Activated T-helper 1 cell treated with anti-CD3 and anti-CD28 coated beads, Interleukin-12 subunit alpha, Interleukin-12 subunit beta, Interleukin-2, Interleukin-4 antibody, amounts not matched to agents 30 ng/mL and 10 ng/mL and 1 ng/mL, durations not matched to agents 14 hours and 24 hours and 36 hours (primary cell): ENCODE measurements at regions of chr4 and their contacts with region 1.

Region 1: DNA sequence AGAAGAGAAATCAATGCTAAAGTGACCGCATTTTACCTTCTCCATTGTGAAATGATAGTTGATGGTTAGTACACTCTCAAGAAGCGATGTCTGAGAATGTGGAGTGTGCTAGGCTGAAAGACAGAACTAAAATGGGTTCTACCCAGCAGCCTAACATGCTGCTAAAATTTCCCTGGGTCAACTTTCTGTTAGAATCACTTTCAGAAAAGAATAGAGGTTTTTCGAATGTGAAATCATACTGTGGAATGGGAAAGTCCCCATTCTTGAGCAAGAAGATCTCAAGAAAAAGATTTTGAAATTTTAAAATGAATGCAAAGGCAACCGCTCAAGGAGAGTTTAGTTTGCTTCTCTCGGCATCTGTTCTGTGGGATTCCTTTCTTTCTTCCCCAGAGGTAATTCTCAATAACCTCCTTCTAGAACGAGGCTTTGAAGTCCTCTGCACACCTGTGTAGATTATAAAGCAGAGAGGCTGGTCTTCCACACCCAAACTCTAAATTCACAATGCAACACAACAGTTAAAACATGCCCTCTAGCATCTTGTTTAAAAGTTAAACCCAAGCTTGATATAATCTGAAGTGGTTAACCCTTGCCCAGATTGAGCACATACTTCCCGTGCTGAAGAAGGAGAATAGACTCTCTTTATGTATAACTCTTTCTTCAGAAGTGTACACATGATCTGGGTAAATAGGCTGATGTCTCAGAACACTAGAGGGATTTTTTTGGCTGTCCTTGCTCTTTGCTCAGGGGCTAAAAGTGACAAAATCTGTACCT is 208.7 kb upstream of the KLF3 start:
- DNase-seq: no peak
- H3K4me3 Mint-ChIP-seq: peak overlapping the region; percentile 16
- H3K27ac Mint-ChIP-seq: peak overlapping the region; percentile 45
- H3K4me1 Mint-ChIP-seq: peaks cover 46% of the 10 kb centered on the region
- H3K27me3 Mint-ChIP-seq: peaks cover 4% of the 10 kb centered on the region

Region 2: GRCh38 chr4:37977471-37978247 is 477.6 kb before region 1 on chr4:
- intact Hi-C with region 1: loop called (anchors 1 kb)
- DNase-seq: peak; percentile 70
- H3K4me3 Mint-ChIP-seq: peak overlapping the region; percentile 86
- H3K27ac Mint-ChIP-seq: peak overlapping the region; percentile 81
- H3K4me1 Mint-ChIP-seq: peaks cover 41% of the 10 kb centered on the region
- H3K27me3 Mint-ChIP-seq: no peaks in the 10 kb centered on the region

Region 3: DNA sequence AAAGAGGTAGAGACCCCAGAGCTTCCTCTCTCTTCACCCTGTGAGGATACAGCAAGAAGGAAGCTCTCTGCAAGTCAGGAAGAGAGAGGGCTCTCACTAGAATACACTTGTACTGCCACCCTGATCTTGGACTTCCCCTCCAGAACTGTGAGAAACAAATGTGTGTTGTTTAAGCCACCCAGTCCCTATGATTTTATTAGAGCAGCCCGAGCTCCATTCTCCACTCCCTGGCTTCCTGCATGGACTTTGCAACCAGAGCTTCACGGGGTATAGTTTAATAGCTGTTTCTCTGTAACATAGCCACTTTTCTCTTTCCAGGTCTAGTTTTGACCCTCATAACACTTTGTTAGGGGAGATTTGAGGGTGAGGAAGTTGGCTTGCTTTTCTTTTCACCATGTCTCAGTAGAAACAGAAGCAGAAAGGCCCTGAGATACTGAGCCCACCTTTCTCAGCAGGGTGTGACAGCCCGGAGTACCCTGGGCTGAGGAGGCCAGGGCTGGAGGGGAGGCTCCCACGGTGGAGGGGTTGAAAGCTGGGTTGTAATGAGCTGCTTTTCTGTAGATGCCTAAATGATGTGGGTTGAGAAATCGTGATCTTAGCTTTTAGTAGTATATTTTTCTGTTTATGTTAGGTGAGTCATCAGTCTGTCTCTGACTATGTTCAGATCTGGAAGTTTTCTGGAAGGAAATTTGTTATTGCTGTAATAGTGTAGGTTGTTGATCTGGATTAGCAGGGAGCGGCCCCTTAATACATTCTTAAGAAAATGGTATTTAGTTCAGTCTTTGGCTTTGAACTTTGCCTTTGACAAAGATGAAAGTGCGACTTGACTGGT is 376.5 kb before region 1 on chr4:
- intact Hi-C with region 1: no loop called
- DNase-seq: no peak
- H3K4me3 Mint-ChIP-seq: no peak overlapping the region
- H3K27ac Mint-ChIP-seq: peak overlapping the region; percentile 77
- H3K4me1 Mint-ChIP-seq: peaks cover 30% of the 10 kb centered on the region
- H3K27me3 Mint-ChIP-seq: no peaks in the 10 kb centered on the region

Region 4: GRCh38 chr4:38297061-38297460 is 158.2 kb before region 1 on chr4:
- intact Hi-C with region 1: no loop called
- DNase-seq: no peak
- H3K4me3 Mint-ChIP-seq: no peak overlapping the region
- H3K27ac Mint-ChIP-seq: no peak overlapping the region
- H3K4me1 Mint-ChIP-seq: no peaks in the 10 kb centered on the region
- H3K27me3 Mint-ChIP-seq: peaks cover 25% of the 10 kb centered on the region

Region 5: DNA sequence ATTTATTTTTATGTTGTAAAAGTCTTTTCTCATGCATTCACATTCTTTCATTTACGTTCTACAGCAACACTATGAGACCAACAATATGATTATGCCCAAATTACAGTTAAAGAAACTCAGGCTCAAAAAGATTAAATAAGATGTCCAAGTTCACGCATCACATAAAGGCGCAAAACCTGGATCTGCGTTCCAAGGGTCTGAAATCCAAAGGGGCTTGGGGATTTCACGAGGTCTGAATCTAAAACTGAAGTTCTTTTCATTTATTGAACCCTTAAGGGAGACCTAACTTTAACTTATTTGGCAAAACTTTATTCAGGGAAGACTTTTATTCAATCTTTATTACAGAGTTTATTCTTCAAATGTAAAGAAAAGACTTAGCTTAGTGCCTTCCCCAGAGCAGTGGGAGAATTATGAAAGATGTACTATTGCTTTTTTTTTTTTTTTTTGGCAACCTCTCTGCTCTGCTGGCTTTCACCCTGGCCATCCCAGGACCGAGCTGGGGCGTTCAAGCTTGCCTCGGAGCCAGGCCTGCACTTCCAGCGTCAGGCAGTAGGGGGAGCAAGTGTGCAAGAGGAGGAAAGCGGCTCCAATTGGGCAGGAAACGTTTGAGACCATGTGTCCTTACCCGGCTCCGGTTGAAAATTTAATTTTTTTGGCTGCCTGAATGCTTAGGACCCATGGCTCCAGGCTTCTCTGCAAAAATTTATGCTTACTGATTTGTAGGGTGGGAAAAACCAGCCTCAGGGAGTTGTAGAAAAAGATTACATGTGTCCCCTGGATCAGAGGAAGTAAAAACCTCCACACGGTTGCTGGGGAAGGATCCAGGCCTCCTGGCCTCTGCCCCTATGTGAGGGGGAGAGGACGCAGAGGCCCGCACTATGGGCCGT is 135.6 kb before region 1 on chr4:
- intact Hi-C with region 1: loop called (anchors 5 kb)
- DNase-seq: peak; percentile 83
- H3K4me3 Mint-ChIP-seq: peak overlapping the region; percentile 48
- H3K27ac Mint-ChIP-seq: peak overlapping the region; percentile 79
- H3K4me1 Mint-ChIP-seq: peaks cover 55% of the 10 kb centered on the region
- H3K27me3 Mint-ChIP-seq: peaks cover 5% of the 10 kb centered on the region

Region 6: DNA sequence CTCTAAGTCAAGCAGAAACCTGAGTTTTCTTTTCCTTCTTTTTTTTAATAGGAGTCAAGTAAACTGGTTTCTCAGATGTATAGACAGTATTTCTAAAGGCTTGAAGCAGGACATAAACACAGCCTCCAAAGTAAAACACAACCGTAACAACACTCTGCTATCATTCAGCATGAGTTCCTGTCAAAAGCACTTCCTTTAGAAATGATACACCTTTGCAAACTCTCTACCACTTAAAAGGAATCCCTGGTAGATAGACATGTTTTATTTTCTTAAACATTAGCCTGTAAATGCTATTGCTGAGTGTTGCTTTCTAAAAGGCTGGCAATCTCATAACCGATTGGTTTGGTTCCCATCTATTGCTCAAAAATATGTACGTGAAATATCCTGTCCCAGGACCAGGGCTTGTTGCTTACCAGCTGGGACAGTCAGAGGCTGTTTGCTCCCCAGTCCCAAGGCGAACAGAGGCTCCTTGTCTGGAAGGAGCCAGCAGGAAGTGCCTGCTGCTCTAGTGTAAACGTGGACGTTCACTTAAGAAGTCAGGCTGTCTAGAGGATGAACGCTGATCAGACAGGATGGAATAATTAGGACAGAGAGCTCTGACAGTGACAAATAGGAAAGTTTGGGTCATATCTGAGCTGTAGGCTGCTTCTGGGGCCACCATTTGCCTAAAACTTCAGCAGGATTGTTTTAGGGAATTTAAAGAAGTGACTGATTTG is 34.8 kb after region 1 on chr4:
- intact Hi-C with region 1: loop called (anchors 2 kb)
- DNase-seq: no peak
- H3K4me3 Mint-ChIP-seq: no peak overlapping the region
- H3K27ac Mint-ChIP-seq: no peak overlapping the region
- H3K4me1 Mint-ChIP-seq: peaks cover 29% of the 10 kb centered on the region
- H3K27me3 Mint-ChIP-seq: peaks cover 6% of the 10 kb centered on the region

Region 7: DNA sequence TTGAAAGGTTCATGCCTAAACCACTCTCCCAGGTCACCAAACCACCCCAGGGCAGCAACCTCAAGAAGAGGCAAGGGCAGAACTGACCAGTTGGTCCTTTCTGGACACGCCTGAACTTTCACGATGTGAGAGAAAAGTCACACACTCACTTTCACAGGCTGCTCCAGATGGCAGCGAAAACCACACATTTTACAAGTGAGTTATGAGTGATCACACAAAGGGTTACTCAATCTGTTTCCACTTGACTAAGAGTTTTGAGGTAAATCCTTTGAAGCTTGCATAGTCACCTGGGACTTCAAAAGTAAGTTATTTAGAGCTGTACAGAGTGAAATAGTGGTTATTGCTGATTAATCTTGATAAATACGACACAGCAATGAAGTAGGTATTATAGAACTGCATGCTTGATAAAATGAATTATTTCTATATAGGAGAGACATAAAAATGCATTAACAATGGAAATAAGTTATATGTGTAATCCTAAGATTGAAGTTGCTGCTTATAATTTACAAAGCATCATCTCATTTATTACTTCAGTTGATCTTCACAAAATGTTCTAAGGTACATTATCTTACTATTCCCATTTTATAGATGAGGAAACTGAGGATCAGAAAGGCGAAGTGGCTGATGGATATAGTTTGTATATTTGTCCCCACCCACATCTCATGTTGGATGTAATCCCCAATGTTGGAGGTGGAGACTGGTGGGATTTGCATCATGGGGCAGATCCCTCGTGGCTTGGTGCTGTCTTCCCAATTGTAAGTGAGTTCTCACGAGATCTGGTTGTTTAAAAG is 105.7 kb after region 1 on chr4:
- intact Hi-C with region 1: loop called (anchors 2 kb)
- DNase-seq: peak; percentile 8
- H3K4me3 Mint-ChIP-seq: no peak overlapping the region
- H3K27ac Mint-ChIP-seq: no peak overlapping the region
- H3K4me1 Mint-ChIP-seq: peaks cover 13% of the 10 kb centered on the region
- H3K27me3 Mint-ChIP-seq: peaks cover 26% of the 10 kb centered on the region

Region 8: GRCh38 chr4:38675146-38676121 is 220.2 kb after region 1 on chr4:
- intact Hi-C with region 1: loop called (anchors 2 kb)
- DNase-seq: peak; percentile 69
- H3K4me3 Mint-ChIP-seq: no peak overlapping the region
- H3K27ac Mint-ChIP-seq: no peak overlapping the region
- H3K4me1 Mint-ChIP-seq: peaks cover 66% of the 10 kb centered on the region
- H3K27me3 Mint-ChIP-seq: no peaks in the 10 kb centered on the region